Activated CD8-positive, alpha-beta T cell treated with anti-CD3 and anti-CD28 coated beads for 36 hours (primary cell): ENCODE measurements at regions of chrX and their contacts with region 1.

Region 1: GRCh38 chrX:41923257-41923969 is at the start of gene CASK:
- DNase-seq: peak; percentile 87
- ATAC-seq: peak; percentile 83
- H3K4me3 Mint-ChIP-seq: peak within 1 kb of the TSS; percentile 96
- H3K27ac Mint-ChIP-seq: peak within 1 kb of the TSS; percentile 93
- H3K4me1 Mint-ChIP-seq: peaks cover 23% of the 10 kb centered on the region
- H3K27me3 Mint-ChIP-seq: no peaks in the 10 kb centered on the region
- CTCF ChIP-seq: no peak
- total RNA-seq, gene CASK: 18.2 to 20.2 TPM

Region 2: GRCh38 chrX:41759817-41760216 is 163.6 kb before region 1 on chrX:
- CTCF ChIA-PET with region 1: no interaction called
- POLR2A ChIA-PET with region 1: no interaction called
- intact Hi-C with region 1: no loop called
- DNase-seq: peak; percentile 6
- ATAC-seq: no peak
- H3K4me3 Mint-ChIP-seq: no peak overlapping the region
- H3K27ac Mint-ChIP-seq: no peak overlapping the region
- H3K4me1 Mint-ChIP-seq: peaks cover 9% of the 10 kb centered on the region
- H3K27me3 Mint-ChIP-seq: no peaks in the 10 kb centered on the region
- CTCF ChIP-seq: peak; percentile 57

Region 3: GRCh38 chrX:41796577-41796976 is 126.8 kb before region 1 on chrX:
- CTCF ChIA-PET with region 1: no interaction called
- POLR2A ChIA-PET with region 1: interaction called, 4 read pairs
- intact Hi-C with region 1: loop called (anchors 10 kb)
- DNase-seq: no peak
- ATAC-seq: no peak
- H3K4me3 Mint-ChIP-seq: no peak overlapping the region
- H3K27ac Mint-ChIP-seq: peak overlapping the region; percentile 69
- H3K4me1 Mint-ChIP-seq: peaks cover 32% of the 10 kb centered on the region
- H3K27me3 Mint-ChIP-seq: no peaks in the 10 kb centered on the region
- CTCF ChIP-seq: no peak

Region 4: GRCh38 chrX:42176789-42177188 is 253.4 kb after region 1 on chrX:
- CTCF ChIA-PET with region 1: no interaction called
- POLR2A ChIA-PET with region 1: no interaction called
- intact Hi-C with region 1: no loop called
- DNase-seq: no peak
- ATAC-seq: no peak
- H3K4me3 Mint-ChIP-seq: no peak overlapping the region
- H3K27ac Mint-ChIP-seq: no peak overlapping the region
- H3K4me1 Mint-ChIP-seq: no peaks in the 10 kb centered on the region
- H3K27me3 Mint-ChIP-seq: no peaks in the 10 kb centered on the region
- CTCF ChIP-seq: no peak